ENCODE measurements at regions of chr5 and their contacts with region 1.

Region 1: DNA sequence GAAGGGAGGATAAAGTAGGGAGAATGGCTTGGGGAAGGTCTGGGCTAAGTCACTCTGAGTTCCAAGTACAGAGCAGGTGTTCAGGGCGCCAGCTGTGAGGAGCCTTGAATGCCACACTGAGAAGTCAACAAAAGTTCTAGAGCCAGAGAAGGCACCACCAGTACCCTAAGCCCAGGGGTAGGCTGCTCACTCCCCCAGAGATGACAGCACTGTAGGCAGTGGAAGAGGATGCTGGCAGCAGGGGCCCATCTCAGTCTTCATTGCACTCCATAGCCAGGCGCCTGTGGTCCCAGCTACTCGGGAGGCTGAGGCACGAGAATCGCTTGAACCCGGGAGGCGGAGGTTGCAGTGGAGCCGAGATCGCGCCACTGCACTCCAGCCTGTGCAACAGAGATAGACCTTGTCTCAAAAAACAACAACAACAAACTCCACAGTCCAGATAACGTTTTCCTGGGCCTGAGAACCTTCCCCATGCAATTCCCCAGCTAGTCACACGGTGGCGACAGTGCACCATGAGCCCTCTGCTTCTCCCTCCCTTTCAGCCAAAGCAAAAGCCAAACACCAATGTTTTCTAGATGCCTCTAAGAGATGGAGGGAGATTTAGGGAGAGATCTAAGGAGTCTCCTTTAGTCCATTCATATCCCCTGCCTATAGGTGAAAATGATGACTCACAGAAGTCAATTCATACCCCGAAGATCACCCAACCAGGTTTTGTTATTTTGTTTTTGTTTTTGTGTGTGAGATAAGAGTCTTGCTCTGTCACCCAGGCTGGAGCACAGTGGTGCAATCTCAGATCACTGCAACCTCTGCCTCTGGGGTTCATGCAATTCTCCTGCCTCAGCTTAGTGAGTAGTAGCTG is 19.8 kb upstream of the NSD1 start:
- DNase-seq: peak; percentile 71 to 79
- ATAC-seq: peak; percentile 16 to 69 (median 52)
- H3K4me3 ChIP-seq: peak overlapping the region in 5 of 10 donors; percentile 27 to 36 (median 31)
- H3K27ac ChIP-seq: peak overlapping the region in 8 of 10 donors; percentile 58 to 81 (median 64)
- H3K4me1 ChIP-seq: peaks cover 0 to 40% (median 16%) of the 10 kb centered on the region in 9 donors
- H3K27me3 ChIP-seq: no peaks in the 10 kb centered on the region
- CTCF ChIP-seq: peak; percentile 95 to 100 (median 99)

Region 2: DNA sequence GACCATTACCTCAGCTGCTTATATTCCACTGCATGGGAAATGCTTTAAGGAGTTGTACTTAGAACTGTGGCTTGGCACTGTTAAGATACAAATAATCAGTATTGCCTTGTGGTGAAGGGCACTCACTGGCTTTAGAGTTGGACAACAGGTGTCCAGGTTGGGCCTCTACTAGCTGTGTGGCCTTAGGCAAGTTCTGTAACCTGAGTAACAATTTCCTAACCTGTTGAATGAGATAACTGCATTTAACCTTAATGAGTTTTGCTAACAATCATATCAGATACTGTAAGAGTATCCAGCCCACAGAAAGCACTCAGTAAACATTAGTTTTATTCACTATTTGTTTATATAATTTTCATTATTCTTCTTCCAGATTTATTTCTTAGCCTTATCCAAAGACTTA is 197.5 kb before region 1 on chr5:
- intact Hi-C with region 1: no loop called
- DNase-seq: no peak
- ATAC-seq: no peak
- H3K4me3 ChIP-seq: no peak overlapping the region
- H3K27ac ChIP-seq: peak overlapping the region in 1 of 10 donors; percentile 17
- H3K4me1 ChIP-seq: no peaks in the 10 kb centered on the region
- H3K27me3 ChIP-seq: no peaks in the 10 kb centered on the region
- CTCF ChIP-seq: no peak

Region 3: GRCh38 chr5:176979669-176980068 is 134.1 kb before region 1 on chr5:
- intact Hi-C with region 1: no loop called
- DNase-seq: no peak
- ATAC-seq: no peak
- H3K4me3 ChIP-seq: no peak overlapping the region
- H3K27ac ChIP-seq: no peak overlapping the region
- H3K4me1 ChIP-seq: peaks cover 0 to 13% (median 0%) of the 10 kb centered on the region in 9 donors
- H3K27me3 ChIP-seq: no peaks in the 10 kb centered on the region
- CTCF ChIP-seq: no peak

Region 4: GRCh38 chr5:177035976-177036375 is 77.8 kb before region 1 on chr5:
- intact Hi-C with region 1: no loop called
- DNase-seq: no peak
- ATAC-seq: no peak
- H3K4me3 ChIP-seq: no peak overlapping the region
- H3K27ac ChIP-seq: no peak overlapping the region
- H3K4me1 ChIP-seq: peaks cover 0 to 15% (median 4%) of the 10 kb centered on the region in 9 donors
- H3K27me3 ChIP-seq: no peaks in the 10 kb centered on the region
- CTCF ChIP-seq: no peak

Region 5: DNA sequence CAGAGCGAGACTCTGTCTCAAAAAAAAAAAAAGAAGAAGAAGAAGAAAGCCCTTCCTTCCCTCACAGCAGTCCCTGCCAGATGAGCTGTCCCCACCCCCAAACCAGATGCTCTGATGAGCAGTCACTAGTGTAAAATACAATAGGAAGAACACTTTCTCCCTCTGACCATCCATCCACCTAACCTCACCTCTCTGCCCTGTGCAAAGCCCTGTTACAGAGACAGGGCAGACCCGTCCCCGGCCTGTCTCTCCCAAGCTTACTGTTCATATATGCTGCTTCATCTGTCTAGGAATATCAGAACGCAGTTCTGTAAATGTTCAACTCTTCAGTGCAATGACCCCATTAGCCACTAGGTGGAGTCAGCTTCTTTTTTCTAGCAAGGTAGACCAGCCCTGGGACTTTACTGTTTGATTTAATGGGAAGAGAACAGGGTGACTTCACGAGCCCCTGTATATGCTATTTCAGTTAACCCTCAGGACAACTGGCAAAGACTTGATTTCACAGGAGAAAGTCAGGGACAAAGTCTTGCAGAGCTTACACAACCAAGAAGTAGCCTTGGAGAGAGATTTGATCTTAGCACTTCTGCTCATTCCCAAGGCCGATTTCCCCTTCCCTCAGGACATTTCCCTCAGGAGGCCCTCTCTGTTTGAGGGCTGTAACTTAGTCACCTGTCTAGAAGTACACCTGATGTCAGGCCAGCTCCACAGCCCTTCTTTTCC is 42.0 kb before region 1 on chr5:
- intact Hi-C with region 1: loop called in 8 of 10 experiments (anchors 1 to 5 kb)
- DNase-seq: peak in 1 of 2 donors; percentile 82
- ATAC-seq: peak; percentile 49 to 86 (median 81)
- H3K4me3 ChIP-seq: no peak overlapping the region
- H3K27ac ChIP-seq: no peak overlapping the region
- H3K4me1 ChIP-seq: peaks cover 0 to 8% (median 0%) of the 10 kb centered on the region in 9 donors
- H3K27me3 ChIP-seq: no peaks in the 10 kb centered on the region
- CTCF ChIP-seq: peak; percentile 82 to 93 (median 88)

Region 6: GRCh38 chr5:177256296-177256695 is 142.5 kb after region 1 on chr5:
- intact Hi-C with region 1: loop called in 1 of 10 experiments (anchors 5 kb)
- DNase-seq: no peak
- ATAC-seq: no peak
- H3K4me3 ChIP-seq: no peak overlapping the region
- H3K27ac ChIP-seq: no peak overlapping the region
- H3K4me1 ChIP-seq: peaks cover 0 to 4% (median 0%) of the 10 kb centered on the region in 9 donors
- H3K27me3 ChIP-seq: no peaks in the 10 kb centered on the region
- CTCF ChIP-seq: no peak

Region 7: GRCh38 chr5:177296581-177296980 is 182.8 kb after region 1 on chr5:
- intact Hi-C with region 1: loop called in 7 of 10 experiments (anchors 5 to 10 kb)
- DNase-seq: no peak
- ATAC-seq: peak in 4 of 8 donors; percentile 10 to 47 (median 35)
- H3K4me3 ChIP-seq: no peak overlapping the region
- H3K27ac ChIP-seq: peak overlapping the region in 5 of 10 donors; percentile 7 to 78 (median 58)
- H3K4me1 ChIP-seq: peaks cover 19 to 60% (median 46%) of the 10 kb centered on the region in 9 donors
- H3K27me3 ChIP-seq: no peaks in the 10 kb centered on the region
- CTCF ChIP-seq: no peak

Region 8: DNA sequence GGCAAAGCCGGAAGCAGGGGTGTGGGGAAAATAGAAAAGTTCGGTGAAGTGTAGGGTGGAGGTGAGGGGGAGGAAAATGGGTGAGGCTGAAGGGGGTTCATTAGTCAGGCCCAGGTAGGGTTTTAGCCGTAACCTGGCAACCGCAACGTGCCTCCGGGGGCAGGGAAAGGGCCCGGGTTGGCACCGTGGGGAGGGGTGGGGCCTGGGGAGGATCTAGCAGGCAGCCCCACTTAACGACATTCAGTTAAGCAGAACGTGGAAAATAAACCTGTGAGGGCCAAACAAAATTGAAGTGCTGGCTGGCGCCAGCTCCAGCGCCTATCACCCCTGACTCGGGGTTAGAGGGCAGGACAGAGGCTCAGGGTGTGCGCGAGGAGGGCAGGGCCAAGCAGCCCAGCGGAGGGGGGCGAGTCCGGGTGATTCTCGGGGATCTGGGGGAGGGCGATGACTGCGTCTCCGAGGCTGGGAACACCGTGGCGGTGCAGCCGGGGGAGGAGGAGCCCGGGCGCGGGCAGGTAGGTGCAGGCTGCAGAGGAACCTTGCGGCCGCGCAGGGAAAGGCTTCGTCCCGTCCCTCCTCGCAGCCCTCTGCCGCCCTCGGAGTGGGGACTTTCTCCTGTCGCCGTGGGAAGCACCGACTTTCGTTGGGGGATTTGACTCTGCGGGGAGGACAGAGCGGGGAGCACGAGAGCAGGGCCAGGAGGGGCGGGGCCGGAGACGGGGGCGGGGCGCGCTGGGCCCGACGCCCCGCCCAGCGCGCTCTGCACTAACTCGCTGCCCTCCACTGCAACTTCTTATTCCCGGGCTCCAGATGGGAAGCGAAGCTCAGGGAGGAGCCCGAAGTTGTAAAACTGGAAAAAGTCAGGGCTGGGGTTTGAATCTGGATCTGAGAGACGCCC is 249.1 kb after region 1 on chr5:
- intact Hi-C with region 1: loop called in 1 of 10 experiments (anchors 10 kb)
- DNase-seq: peak; percentile 41 to 68
- ATAC-seq: peak; percentile 32 to 55 (median 47)
- H3K4me3 ChIP-seq: peak overlapping the region; percentile 9 to 55 (median 44)
- H3K27ac ChIP-seq: peak overlapping the region in 1 of 10 donors; percentile 74
- H3K4me1 ChIP-seq: peaks cover 3 to 86% (median 43%) of the 10 kb centered on the region in 9 donors
- H3K27me3 ChIP-seq: no peaks in the 10 kb centered on the region
- CTCF ChIP-seq: no peak

Region 9: GRCh38 chr5:177454397-177455035 is 340.7 kb after region 1 on chr5:
- intact Hi-C with region 1: loop called in 1 of 10 experiments (anchors 10 kb)
- DNase-seq: peak; percentile 91 to 93
- ATAC-seq: peak; percentile 63 to 77 (median 74)
- H3K4me3 ChIP-seq: peak overlapping the region; percentile 39 to 84 (median 63)
- H3K27ac ChIP-seq: peak overlapping the region; percentile 1 to 82 (median 74)
- H3K4me1 ChIP-seq: peaks cover 10 to 57% (median 38%) of the 10 kb centered on the region in 9 donors
- H3K27me3 ChIP-seq: peaks cover 0 to 38% (median 2%) of the 10 kb centered on the region in 7 donors
- CTCF ChIP-seq: peak; percentile 88 to 98 (median 93)